ENCODE measurements at regions of chr19 and their contacts with region 1.

Region 1: DNA sequence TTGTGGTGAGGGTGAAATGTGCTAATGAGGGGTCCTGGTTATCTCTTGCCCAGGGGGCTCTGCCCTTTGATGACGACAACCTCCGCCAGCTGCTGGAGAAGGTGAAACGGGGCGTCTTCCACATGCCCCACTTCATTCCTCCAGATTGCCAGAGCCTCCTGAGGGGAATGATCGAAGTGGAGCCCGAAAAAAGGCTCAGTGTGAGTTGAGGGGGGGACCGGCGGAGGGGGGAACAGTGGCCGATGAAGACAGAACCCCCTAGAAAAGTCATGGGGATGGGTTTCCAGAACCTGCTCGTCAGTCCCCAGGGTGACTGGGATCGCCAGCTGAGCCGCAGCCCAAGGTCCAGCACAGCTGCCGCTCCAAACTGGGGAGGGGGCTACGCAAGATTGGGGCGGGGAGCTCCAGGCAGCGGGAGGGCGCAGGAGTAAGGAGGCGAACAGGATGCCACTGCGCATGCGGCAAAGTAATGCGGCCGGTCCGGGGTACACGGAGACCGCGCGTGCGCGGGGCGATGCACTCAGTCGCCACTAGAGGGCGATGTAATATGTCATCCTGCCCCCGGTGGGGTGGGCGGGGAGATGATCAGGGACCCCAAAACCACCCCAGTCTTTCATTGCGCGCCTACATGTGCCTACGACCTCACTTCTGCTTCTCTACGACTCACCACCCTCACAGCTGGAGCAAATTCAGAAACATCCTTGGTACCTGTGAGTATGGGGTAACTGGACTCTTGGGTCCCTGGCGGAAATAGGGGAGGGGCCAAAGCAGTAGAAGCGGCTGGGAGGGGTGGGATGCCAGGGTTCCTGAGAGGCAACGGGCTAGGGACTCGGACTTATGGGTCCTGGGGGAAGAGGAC is 17.9 kb downstream of the BRSK1 start:
- DNase-seq: peak; percentile 74 to 85
- H3K4me3 ChIP-seq: peak overlapping the region in 1 of 2 donors; percentile 34
- H3K27ac ChIP-seq: no peak overlapping the region
- H3K4me1 ChIP-seq: peaks cover 0 to 6% (median 0%) of the 10 kb centered on the region in 4 donors
- H3K27me3 ChIP-seq: peaks cover 0 to 2% of the 10 kb centered on the region in 2 donors
- CTCF ChIP-seq: peak; percentile 78 to 96

Region 2: DNA sequence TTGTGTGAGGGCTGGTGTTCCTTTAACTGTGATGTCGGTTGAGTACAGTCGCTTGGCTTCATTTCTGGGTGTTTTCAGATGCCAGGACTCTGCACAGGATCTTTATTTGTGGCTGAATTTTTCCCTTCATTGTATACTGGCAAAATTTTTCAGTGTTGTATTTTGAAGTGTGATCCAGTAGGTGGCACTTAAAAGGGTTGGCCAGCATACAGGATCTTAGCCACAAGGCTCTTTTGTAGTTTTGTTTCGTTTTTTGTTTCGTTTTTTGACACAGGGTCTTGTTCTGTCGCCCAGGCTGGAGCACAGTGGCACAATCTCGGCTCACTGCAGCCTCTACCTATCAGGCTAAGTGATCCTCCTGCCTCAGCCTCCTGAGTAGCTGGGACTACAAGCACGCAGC is 418.9 kb before region 1 on chr19:
- intact Hi-C with region 1: no loop called
- DNase-seq: no peak
- H3K4me3 ChIP-seq: no peak overlapping the region
- H3K27ac ChIP-seq: no peak overlapping the region
- H3K4me1 ChIP-seq: no peaks in the 10 kb centered on the region
- H3K27me3 ChIP-seq: no peaks in the 10 kb centered on the region
- CTCF ChIP-seq: no peak

Region 3: DNA sequence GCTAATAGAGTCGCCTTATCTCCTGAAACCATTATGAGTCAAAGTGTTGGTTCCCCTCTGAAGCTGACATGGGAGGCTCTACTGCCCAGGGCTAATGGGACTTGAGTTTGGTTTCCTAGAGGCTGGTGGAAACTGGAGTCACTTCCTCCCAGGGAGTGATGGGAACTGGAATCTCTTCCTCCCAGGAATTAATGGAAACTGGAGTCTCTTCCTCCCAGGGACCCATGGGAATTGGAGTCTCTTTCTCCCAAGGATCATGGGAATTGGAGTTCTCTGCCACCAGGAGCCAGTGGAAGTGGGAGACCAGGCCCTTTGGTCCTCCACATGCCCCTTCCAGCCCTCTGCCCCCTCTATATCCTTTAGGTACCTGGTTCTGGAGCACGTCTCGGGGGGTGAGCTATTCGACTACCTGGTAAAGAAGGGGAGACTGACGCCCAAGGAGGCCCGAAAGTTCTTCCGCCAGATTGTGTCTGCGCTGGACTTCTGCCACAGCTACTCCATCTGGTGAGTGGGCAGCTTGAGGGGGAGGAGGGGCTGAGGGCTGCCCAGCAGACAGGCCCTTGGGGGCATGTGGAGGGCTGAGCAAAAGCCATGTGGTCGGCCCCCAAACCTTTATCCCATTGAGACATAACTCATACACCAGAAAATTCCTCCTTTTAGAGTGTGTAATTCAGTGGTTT is 12.4 kb before region 1 on chr19:
- intact Hi-C with region 1: no loop called
- DNase-seq: no peak
- H3K4me3 ChIP-seq: no peak overlapping the region
- H3K27ac ChIP-seq: no peak overlapping the region
- H3K4me1 ChIP-seq: peaks cover 0 to 13% (median 5%) of the 10 kb centered on the region in 4 donors
- H3K27me3 ChIP-seq: peaks cover 0 to 14% of the 10 kb centered on the region in 2 donors
- CTCF ChIP-seq: no peak

Region 4: GRCh38 chr19:55339048-55339888 is 37.6 kb after region 1 on chr19 and contains the start of gene KMT5C:
- intact Hi-C with region 1: loop called (anchors 5 kb)
- DNase-seq: peak; percentile 100
- H3K4me3 ChIP-seq: peak within 1 kb of the TSS; percentile 75 to 77
- H3K27ac ChIP-seq: peak within 1 kb of the TSS; percentile 89
- H3K4me1 ChIP-seq: peaks cover 0 to 23% (median 21%) of the 10 kb centered on the region in 4 donors
- H3K27me3 ChIP-seq: peaks cover 0 to 14% of the 10 kb centered on the region in 2 donors
- CTCF ChIP-seq: peak; percentile 49 to 59

Region 5: GRCh38 chr19:55385740-55386529 is 84.2 kb after region 1 on chr19 and contains the start of gene RPL28:
- intact Hi-C with region 1: loop called (anchors 5 kb)
- DNase-seq: peak; percentile 96 to 99
- H3K4me3 ChIP-seq: peak within 1 kb of the TSS; percentile 78 to 93
- H3K27ac ChIP-seq: peak within 1 kb of the TSS; percentile 85 to 94
- H3K4me1 ChIP-seq: peaks cover 0 to 59% (median 47%) of the 10 kb centered on the region in 4 donors
- H3K27me3 ChIP-seq: no peaks in the 10 kb centered on the region
- CTCF ChIP-seq: no peak

Region 6: GRCh38 chr19:55418185-55418584 is 116.5 kb after region 1 on chr19:
- intact Hi-C with region 1: loop called (anchors 10 kb)
- DNase-seq: no peak
- H3K4me3 ChIP-seq: no peak overlapping the region
- H3K27ac ChIP-seq: no peak overlapping the region
- H3K4me1 ChIP-seq: no peaks in the 10 kb centered on the region
- H3K27me3 ChIP-seq: peaks cover 0 to 44% of the 10 kb centered on the region in 2 donors
- CTCF ChIP-seq: peak; percentile 47 to 48

Measured in tibial artery (tissue), 4 donors.